Activated naive CD4-positive, alpha-beta T cell treated with anti-CD3 and anti-CD28 coated beads for 36 hours (primary cell): ENCODE measurements at regions of chr19 and their contacts with region 1.

Region 1: DNA sequence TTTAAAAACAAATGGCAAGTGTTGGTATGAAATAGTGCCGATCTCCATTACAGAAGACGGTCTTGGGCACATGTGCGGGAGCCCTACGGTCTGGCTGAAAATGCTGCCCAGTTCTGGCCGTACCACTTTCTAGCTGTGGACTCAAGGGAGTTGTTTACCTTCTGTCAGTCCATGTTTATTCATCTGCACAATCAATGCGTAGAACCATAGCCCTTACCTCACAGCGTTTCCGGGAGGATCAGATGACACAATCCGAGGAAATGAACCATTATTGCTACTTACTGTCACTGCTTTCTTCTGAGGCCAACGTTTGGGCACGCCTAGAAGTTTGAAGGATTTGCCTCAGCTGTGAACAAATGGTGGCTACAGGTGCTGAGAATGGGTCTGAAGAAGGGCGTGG is 31.2 kb downstream of the GADD45B start:
- DNase-seq: peak; percentile 75
- H3K4me3 Mint-ChIP-seq: peak overlapping the region; percentile 39
- H3K27ac Mint-ChIP-seq: no peak overlapping the region
- H3K4me1 Mint-ChIP-seq: peaks cover 26% of the 10 kb centered on the region
- H3K27me3 Mint-ChIP-seq: peaks cover 2% of the 10 kb centered on the region

Region 2: GRCh38 chr19:2543463-2544442 is 36.6 kb after region 1 on chr19:
- CTCF ChIA-PET with region 1: no interaction called
- intact Hi-C with region 1: loop called (anchors 1 kb)
- DNase-seq: peak; percentile 89
- H3K4me3 Mint-ChIP-seq: peak overlapping the region; percentile 63
- H3K27ac Mint-ChIP-seq: no peak overlapping the region
- H3K4me1 Mint-ChIP-seq: peaks cover 17% of the 10 kb centered on the region
- H3K27me3 Mint-ChIP-seq: no peaks in the 10 kb centered on the region